BJ (cell line): ENCODE measurements at regions of chr7 and their contacts with region 1.

Region 1: GRCh38 chr7:120857588-120858573 is at the start of gene TSPAN12:
- DNase-seq: no peak
- H3K4me3 ChIP-seq: peak within 1 kb of the TSS; percentile 79
- H3K27me3 ChIP-seq: peaks cover 4% of the 10 kb centered on the region
- CTCF ChIP-seq: peak; percentile 44
- polyA plus RNA-seq, gene TSPAN12: 0.25 TPM in 1 of 2 replicates, not detected in the other

Region 2: GRCh38 chr7:120842121-120842621 is 15.7 kb before region 1 on chr7:
- CTCF ChIA-PET with region 1: interaction called, 11 read pairs
- POLR2A ChIA-PET with region 1: no interaction called
- DNase-seq: no peak
- H3K4me3 ChIP-seq: no peak overlapping the region
- H3K27me3 ChIP-seq: no peaks in the 10 kb centered on the region
- CTCF ChIP-seq: no peak

Region 3: DNA sequence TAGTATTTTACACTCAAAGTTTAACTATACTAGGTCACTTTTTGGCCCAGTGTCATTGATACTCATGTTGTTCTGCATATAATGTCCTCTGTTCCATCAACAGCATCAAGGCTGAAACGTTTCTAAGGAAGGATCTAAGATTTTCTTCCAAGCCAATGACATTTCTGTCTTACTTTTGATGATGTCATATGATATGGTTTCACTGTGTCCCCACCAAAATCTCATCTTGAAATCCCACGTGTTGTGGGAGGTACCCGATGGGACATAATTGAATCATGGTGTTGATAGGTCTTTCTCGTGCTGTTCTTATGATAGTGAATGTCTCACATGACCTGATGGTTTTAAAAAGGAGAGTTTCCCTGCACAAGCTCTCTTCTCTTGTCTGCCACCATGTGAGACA is 36.4 kb after region 1 on chr7:
- CTCF ChIA-PET with region 1: no interaction called
- POLR2A ChIA-PET with region 1: no interaction called
- DNase-seq: no peak
- H3K4me3 ChIP-seq: no peak overlapping the region
- H3K27me3 ChIP-seq: no peaks in the 10 kb centered on the region
- CTCF ChIP-seq: no peak